ENCODE measurements at regions of chr19 and their contacts with region 1.

Region 1: DNA sequence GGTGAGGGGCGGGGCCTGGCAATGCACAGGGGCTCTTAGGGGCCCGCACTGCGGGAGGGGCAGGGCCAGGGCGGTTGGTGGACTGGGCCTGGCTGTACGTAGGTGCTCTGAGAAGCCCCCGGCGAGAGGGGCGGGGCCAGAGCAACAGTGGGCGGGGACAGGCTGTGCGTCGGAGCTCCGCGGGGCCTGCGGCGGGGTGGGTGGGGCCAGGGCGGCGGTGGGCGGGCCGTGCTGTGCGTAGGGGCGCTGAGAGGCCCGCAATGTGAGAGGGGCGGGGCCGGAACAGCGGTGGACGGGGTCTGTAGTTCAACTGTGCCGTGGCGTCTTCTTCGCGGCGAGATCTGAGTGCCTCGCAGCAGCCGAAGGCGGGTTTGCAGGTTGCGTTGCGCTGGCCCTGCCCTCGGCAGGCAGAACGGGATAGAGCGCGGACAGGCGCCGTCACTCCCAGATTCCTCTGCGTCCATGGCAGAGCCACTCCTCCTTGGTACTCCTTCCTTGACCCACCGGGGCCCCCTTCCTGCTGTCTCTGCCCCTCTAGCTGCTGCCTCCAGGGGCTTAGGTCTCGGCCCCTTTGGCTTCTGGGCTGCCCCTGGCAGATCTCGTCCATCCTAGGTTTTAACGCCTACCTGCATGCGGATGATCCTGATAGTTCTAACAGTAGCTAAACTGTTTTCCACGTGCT is 33.2 kb downstream of the CCNE1 start:
- DNase-seq: peak; percentile 95 to 96
- H3K4me3 ChIP-seq: peak overlapping the region; percentile 31 to 86 (median 62)
- H3K27ac ChIP-seq: peak overlapping the region; percentile 76 to 86 (median 79)
- H3K4me1 ChIP-seq: peaks cover 16 to 23% of the 10 kb centered on the region in 2 donors
- H3K27me3 ChIP-seq: no peaks in the 10 kb centered on the region
- CTCF ChIP-seq: no peak
- POLR2A ChIP-seq: peak in 1 of 2 donors; percentile 69

Region 2: GRCh38 chr19:29704562-29705558 is 140.2 kb before region 1 on chr19:
- intact Hi-C with region 1: no loop called
- DNase-seq: no peak
- H3K4me3 ChIP-seq: no peak overlapping the region
- H3K27ac ChIP-seq: no peak overlapping the region
- H3K4me1 ChIP-seq: no peaks in the 10 kb centered on the region
- H3K27me3 ChIP-seq: no peaks in the 10 kb centered on the region
- CTCF ChIP-seq: no peak
- POLR2A ChIP-seq: no peak

Region 3: DNA sequence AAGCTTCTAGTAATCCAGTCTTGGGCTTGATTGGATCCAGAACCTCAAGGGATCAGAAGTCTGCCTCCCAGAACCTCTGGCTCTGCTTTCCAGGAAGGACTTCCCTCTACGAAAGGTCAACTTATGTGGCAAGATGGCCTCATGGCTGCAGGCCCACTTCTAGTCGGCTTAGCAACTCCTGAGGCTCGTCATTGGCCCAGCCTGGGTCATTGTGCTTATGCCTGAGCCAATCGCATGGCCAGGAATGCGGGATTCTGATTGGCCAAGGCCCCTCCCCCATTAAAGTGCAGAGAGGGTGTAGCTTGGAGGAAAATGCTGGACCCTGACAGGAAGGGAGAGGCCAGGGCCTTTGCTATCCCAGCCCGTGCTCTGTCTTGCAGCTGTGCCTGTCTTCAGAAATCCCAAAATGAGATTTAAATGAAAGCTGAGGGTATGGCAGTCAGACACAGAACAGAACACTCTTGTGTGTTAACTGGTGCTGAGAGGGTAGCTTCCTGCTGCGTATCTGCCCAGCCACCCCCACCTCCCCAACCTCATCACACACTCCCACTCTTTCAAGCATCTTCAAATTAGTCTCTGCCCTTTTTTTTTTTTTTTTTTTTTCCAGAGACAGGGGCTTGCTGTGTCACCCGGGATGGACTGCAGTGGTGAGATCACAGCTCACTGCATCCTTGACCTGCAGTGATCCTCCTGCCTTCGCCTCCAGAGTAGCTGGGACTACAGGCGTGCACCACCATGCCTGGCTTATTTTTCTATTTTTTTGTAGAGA is 38.8 kb before region 1 on chr19:
- intact Hi-C with region 1: loop called (anchors 5 kb)
- DNase-seq: peak in 1 of 2 donors; percentile 8
- H3K4me3 ChIP-seq: no peak overlapping the region
- H3K27ac ChIP-seq: no peak overlapping the region
- H3K4me1 ChIP-seq: peaks cover 0 to 9% of the 10 kb centered on the region in 2 donors
- H3K27me3 ChIP-seq: no peaks in the 10 kb centered on the region
- CTCF ChIP-seq: no peak
- POLR2A ChIP-seq: no peak